Caco-2 (cell line): ENCODE measurements at regions of chr12 and their contacts with region 1.

Region 1: DNA sequence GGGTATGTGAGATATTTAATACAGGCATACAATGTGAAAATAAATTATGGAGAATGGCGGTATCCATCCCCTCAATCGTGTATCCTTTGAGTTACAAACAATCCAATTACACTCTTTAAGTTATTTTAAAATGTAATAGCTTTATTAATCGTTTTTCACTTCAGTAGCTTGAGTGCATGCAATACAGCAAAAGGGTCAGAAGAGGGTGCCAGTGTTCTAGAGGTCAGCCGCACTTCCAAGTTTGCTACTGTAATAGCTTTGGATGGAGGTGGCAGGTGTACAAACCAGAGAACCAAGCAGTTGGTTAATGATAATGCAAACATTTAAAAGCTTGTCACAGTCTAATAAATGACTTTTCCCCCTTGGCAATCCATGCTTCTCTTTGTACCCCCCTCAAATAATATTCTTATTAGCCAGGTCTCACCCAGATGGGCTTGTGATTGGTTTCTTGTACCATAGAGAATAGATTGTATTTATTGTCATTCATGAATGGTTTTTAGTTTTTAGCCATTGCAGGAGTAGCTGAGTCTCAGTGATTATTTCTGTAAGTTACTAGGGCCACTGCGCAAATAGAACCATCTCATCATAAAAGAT is 127.0 kb downstream of the ERC1 start:
- DNase-seq: peak; percentile 72 to 79
- H3K4me3 ChIP-seq: no peak overlapping the region
- H3K4me3 Mint-ChIP-seq: no peak overlapping the region
- H3K27ac Mint-ChIP-seq: no peak overlapping the region
- H3K4me1 ChIP-seq: no peaks in the 10 kb centered on the region
- H3K4me1 Mint-ChIP-seq: peaks cover 4% of the 10 kb centered on the region
- H3K27me3 ChIP-seq: no peaks in the 10 kb centered on the region
- H3K27me3 Mint-ChIP-seq: no peaks in the 10 kb centered on the region
- CTCF ChIP-seq: peak; percentile 97 to 99

Region 2: DNA sequence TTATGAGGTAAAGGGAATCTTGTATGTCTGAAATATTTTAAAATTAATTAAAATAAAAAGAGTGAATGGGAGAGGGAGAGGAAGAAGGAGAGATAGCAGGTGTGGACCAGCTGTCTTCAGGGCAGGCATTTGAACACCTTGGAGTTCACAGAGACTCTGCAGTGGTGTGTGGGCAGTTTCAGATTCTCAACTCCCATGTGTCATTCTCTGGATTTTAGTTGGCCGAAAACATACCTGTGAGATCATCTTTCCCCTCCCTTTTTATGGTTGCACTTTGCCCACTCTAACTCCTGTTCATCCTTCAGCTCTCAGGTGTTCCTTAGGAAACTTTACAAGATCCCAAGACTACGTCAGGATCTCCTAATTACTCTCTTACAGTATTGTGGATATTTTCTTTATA is 18.9 kb before region 1 on chr12:
- CTCF ChIA-PET with region 1: interaction called, 11 read pairs
- POLR2A ChIA-PET with region 1: no interaction called
- intact Hi-C with region 1: no loop called
- DNase-seq: peak in 1 of 2 experiments; percentile 50
- H3K4me3 ChIP-seq: no peak overlapping the region
- H3K4me3 Mint-ChIP-seq: no peak overlapping the region
- H3K27ac Mint-ChIP-seq: peak overlapping the region; percentile 39
- H3K4me1 ChIP-seq: peaks cover 27% of the 10 kb centered on the region
- H3K4me1 Mint-ChIP-seq: peaks cover 55% of the 10 kb centered on the region
- H3K27me3 ChIP-seq: no peaks in the 10 kb centered on the region
- H3K27me3 Mint-ChIP-seq: no peaks in the 10 kb centered on the region
- CTCF ChIP-seq: no peak

Region 3: DNA sequence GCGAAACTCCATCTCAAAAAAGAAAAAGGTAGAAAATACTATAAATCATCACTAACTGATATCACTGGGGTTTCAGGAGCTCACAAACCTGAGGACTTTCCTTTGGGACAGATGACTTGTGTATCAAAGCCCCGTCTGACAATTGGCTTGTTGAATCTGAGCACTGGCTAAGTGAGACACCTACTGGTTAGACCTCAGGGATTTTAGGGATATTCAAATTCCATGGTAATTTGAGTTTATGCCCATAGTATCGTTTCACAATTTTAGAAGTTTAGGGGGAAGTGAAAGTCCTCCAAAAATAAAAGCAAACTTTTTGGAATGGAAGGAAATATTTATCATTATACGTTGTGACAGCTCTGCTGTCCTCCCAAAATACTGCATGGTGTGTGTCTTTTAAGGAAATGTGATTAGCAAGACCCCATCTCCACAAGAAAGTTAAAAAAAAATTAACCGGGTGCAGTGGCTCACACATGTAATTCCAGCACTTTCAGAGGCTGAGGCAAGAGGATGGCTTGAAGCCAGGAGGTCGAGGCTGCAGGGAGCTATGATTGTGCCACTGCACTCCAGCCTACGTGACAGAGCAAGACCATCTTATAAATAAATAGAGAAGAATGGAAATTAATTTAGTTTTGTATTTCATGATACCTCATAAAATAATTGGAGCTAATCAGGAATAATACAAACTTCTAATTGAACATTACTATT is 427.1 kb after region 1 on chr12:
- CTCF ChIA-PET with region 1: interaction called, 16 read pairs
- POLR2A ChIA-PET with region 1: no interaction called
- intact Hi-C with region 1: no loop called
- DNase-seq: no peak
- H3K4me3 ChIP-seq: no peak overlapping the region
- H3K4me3 Mint-ChIP-seq: no peak overlapping the region
- H3K27ac Mint-ChIP-seq: no peak overlapping the region
- H3K4me1 ChIP-seq: no peaks in the 10 kb centered on the region
- H3K4me1 Mint-ChIP-seq: no peaks in the 10 kb centered on the region
- H3K27me3 ChIP-seq: no peaks in the 10 kb centered on the region
- H3K27me3 Mint-ChIP-seq: no peaks in the 10 kb centered on the region
- CTCF ChIP-seq: peak; percentile 16 to 39

Region 4: DNA sequence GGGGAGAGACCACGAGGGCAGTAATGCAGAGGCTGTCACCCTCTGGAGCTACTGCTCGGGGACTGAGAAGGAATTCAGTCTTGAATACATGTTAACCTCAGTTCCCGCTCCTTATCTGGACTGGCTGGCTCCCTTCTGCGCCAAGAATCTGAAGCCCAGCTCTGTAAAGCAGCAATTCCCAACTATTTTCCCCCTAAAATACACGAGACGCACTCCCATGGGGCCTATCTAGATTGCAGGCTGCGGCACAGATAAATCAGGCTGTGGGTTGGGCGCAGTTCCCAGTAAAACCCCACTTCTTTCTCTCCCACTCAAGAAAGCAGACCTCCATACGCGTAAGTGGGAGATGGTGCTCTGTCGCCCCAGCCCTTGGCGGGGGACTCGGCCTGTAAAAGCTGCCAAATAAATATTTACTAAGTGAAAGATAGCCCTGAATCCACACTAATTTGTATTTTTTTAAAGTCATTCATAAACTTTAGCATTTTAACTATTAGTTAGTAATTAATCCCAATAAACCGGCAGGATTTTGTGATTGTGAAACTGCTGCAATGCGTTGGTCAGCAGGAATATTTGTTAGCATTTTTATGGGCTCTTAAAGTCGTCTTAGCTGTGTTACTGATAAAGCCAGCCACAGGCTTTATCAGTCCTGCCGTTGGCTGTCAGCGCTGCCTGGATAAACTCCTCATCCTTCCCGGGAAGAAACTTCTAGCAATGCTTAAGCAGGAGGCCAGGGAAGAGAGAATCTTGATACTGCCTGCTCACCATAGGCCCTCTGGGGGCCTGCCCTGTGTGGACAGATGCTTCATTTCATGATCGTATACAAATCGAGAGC is 458.6 kb after region 1 on chr12:
- CTCF ChIA-PET with region 1: interaction called, 91 read pairs
- POLR2A ChIA-PET with region 1: no interaction called
- intact Hi-C with region 1: no loop called
- DNase-seq: peak in 1 of 2 experiments; percentile 46
- H3K4me3 ChIP-seq: no peak overlapping the region
- H3K4me3 Mint-ChIP-seq: peak overlapping the region; percentile 19
- H3K27ac Mint-ChIP-seq: no peak overlapping the region
- H3K4me1 ChIP-seq: peaks cover 28% of the 10 kb centered on the region
- H3K4me1 Mint-ChIP-seq: peaks cover 26% of the 10 kb centered on the region
- H3K27me3 ChIP-seq: no peaks in the 10 kb centered on the region
- H3K27me3 Mint-ChIP-seq: peaks cover 7% of the 10 kb centered on the region
- CTCF ChIP-seq: no peak

Region 5: DNA sequence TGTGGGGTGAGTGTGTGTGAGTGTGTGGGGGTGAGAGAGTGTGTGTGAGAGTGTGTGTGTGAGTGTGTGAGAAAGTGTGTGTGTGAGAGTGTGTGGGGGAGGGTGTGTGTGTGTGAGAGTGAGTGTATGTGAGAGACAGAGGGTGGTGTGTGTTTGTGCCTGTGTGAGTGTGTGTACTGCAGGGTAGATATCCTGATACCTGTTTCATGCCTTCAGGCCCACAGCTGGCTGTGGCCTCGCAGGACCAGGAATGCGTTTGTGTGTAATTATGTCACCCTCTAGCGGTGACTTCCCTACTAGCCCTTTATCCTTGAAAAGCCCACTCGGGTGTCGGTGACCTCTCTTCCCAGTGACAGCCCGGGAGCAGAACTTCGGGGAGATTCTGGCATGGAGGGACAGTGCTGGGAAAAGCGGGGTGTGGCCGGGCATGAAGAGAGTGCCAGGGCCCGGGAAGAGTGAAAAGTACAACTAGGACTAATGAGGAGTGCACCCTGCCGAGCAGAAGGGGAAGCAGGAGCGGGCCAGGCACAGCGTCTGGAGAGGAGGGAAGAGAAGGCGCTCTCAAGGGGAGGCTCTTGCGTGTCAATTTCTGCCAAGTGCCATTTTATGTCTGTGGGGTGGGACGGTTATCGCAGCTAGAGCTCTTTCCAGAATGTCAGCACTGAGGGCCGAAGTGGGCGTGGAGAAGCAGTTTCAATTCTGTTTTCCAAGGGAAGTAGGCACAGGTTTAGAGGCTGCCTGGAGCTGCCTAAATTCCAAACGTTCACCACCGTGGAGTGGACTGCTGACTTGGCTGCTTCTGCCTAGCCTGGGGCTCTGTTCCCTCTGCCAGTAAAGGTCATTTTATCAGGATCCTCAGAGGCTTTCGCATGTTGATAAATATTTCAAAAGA is 487.3 kb after region 1 on chr12:
- CTCF ChIA-PET with region 1: interaction called, 15 read pairs
- POLR2A ChIA-PET with region 1: interaction called, 6 read pairs
- intact Hi-C with region 1: loop called (anchors 1 kb)
- DNase-seq: peak; percentile 89
- H3K4me3 ChIP-seq: peak overlapping the region; percentile 33
- H3K4me3 Mint-ChIP-seq: peak overlapping the region; percentile 74
- H3K27ac Mint-ChIP-seq: peak overlapping the region; percentile 85
- H3K4me1 ChIP-seq: peaks cover 9% of the 10 kb centered on the region
- H3K4me1 Mint-ChIP-seq: peaks cover 11% of the 10 kb centered on the region
- H3K27me3 ChIP-seq: no peaks in the 10 kb centered on the region
- H3K27me3 Mint-ChIP-seq: no peaks in the 10 kb centered on the region
- CTCF ChIP-seq: peak; percentile 90 to 93

Region 6: GRCh38 chr12:2341871-2342270 is 1223.8 kb after region 1 on chr12:
- CTCF ChIA-PET with region 1: no interaction called
- POLR2A ChIA-PET with region 1: no interaction called
- intact Hi-C with region 1: no loop called
- DNase-seq: no peak
- H3K4me3 ChIP-seq: no peak overlapping the region
- H3K4me3 Mint-ChIP-seq: no peak overlapping the region
- H3K27ac Mint-ChIP-seq: no peak overlapping the region
- H3K4me1 ChIP-seq: no peaks in the 10 kb centered on the region
- H3K4me1 Mint-ChIP-seq: no peaks in the 10 kb centered on the region
- H3K27me3 ChIP-seq: no peaks in the 10 kb centered on the region
- H3K27me3 Mint-ChIP-seq: peaks cover 21% of the 10 kb centered on the region
- CTCF ChIP-seq: no peak